ENCODE measurements at regions of chr7 and their contacts with region 1.

Region 1: GRCh38 chr7:152025077-152025936 is at the start of gene GALNT11:
- DNase-seq: peak; percentile 80 to 93 (median 91)
- H3K4me3 ChIP-seq: peak within 1 kb of the TSS; percentile 76 to 85
- H3K4me3 Mint-ChIP-seq: peak within 1 kb of the TSS; percentile 86 to 95 (median 90)
- H3K27ac ChIP-seq: peak within 1 kb of the TSS; percentile 79
- H3K27ac Mint-ChIP-seq: peak within 1 kb of the TSS; percentile 92 to 99 (median 96)
- H3K4me1 ChIP-seq: peaks cover 26% of the 10 kb centered on the region
- H3K4me1 Mint-ChIP-seq: peaks cover 20 to 45% (median 34%) of the 10 kb centered on the region in 4 donors
- H3K27me3 ChIP-seq: no peaks in the 10 kb centered on the region
- H3K27me3 Mint-ChIP-seq: no peaks in the 10 kb centered on the region
- total RNA-seq, gene GALNT11: 19.1 to 23.6 TPM

Region 2: DNA sequence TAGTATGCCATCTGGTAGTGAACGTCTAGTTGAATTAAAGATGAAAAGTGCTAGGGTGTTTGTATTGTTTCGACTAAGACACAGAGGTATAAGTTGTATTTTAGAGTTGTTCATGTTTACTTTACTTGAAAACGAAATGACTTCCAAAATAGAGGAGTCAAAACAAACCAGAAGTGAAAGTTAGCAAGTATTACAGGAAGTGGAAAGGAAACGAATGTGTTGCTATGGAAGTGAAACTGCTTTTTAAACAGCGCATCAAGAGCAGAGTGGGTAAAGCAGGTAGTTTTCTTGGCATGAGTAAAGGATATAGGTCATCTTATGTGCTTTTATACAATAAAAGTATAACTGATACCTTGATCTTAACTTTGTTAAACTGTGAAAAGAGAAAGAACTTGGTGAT is 89.1 kb before region 1 on chr7:
- CTCF ChIA-PET with region 1: no interaction called
- POLR2A ChIA-PET with region 1: no interaction called
- intact Hi-C with region 1: loop called (anchors 1 kb)
- DNase-seq: peak in 4 of 5 donors; percentile 60 to 76 (median 68)
- H3K4me3 ChIP-seq: peak overlapping the region in 1 of 2 donors; percentile 8
- H3K4me3 Mint-ChIP-seq: peak overlapping the region; percentile 78 to 94 (median 87)
- H3K27ac ChIP-seq: peak overlapping the region; percentile 54
- H3K27ac Mint-ChIP-seq: peak overlapping the region; percentile 85 to 99 (median 98)
- H3K4me1 ChIP-seq: peaks cover 15% of the 10 kb centered on the region
- H3K4me1 Mint-ChIP-seq: peaks cover 16 to 23% (median 21%) of the 10 kb centered on the region in 4 donors
- H3K27me3 ChIP-seq: no peaks in the 10 kb centered on the region
- H3K27me3 Mint-ChIP-seq: no peaks in the 10 kb centered on the region

Region 3: DNA sequence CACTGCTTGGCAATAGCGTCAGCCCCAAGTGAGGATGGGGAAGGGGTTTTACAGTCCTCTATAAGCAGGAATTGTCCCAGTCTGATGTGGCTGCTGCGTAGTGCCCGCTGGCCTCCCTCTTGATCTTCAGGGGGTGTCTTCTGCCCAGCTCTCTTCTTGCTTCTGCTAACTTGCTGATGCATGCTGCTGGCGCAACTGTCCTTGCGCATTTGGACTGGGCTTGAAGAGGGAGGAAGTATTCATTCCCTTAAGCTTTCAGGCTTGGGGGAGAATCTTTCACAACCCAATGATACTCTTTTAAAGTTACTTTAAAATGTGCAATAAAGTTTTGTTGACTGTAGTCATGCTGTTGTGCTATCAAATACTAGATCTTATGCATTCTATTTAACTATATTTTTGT is 10.5 kb after region 1 on chr7:
- CTCF ChIA-PET with region 1: no interaction called
- POLR2A ChIA-PET with region 1: no interaction called
- intact Hi-C with region 1: no loop called
- DNase-seq: no peak
- H3K4me3 ChIP-seq: no peak overlapping the region
- H3K4me3 Mint-ChIP-seq: no peak overlapping the region
- H3K27ac ChIP-seq: no peak overlapping the region
- H3K27ac Mint-ChIP-seq: no peak overlapping the region
- H3K4me1 ChIP-seq: no peaks in the 10 kb centered on the region
- H3K4me1 Mint-ChIP-seq: peaks cover 4 to 12% (median 7%) of the 10 kb centered on the region in 4 donors
- H3K27me3 ChIP-seq: no peaks in the 10 kb centered on the region
- H3K27me3 Mint-ChIP-seq: no peaks in the 10 kb centered on the region

Region 4: GRCh38 chr7:152120210-152120609 is 94.9 kb after region 1 on chr7:
- CTCF ChIA-PET with region 1: no interaction called
- POLR2A ChIA-PET with region 1: no interaction called
- intact Hi-C with region 1: no loop called
- DNase-seq: no peak
- H3K4me3 ChIP-seq: no peak overlapping the region
- H3K4me3 Mint-ChIP-seq: no peak overlapping the region
- H3K27ac ChIP-seq: no peak overlapping the region
- H3K27ac Mint-ChIP-seq: peak overlapping the region in 2 of 7 donors; percentile 8 to 32
- H3K4me1 ChIP-seq: peaks cover 7% of the 10 kb centered on the region
- H3K4me1 Mint-ChIP-seq: peaks cover 10 to 20% (median 16%) of the 10 kb centered on the region in 4 donors
- H3K27me3 ChIP-seq: no peaks in the 10 kb centered on the region
- H3K27me3 Mint-ChIP-seq: no peaks in the 10 kb centered on the region

Region 5: DNA sequence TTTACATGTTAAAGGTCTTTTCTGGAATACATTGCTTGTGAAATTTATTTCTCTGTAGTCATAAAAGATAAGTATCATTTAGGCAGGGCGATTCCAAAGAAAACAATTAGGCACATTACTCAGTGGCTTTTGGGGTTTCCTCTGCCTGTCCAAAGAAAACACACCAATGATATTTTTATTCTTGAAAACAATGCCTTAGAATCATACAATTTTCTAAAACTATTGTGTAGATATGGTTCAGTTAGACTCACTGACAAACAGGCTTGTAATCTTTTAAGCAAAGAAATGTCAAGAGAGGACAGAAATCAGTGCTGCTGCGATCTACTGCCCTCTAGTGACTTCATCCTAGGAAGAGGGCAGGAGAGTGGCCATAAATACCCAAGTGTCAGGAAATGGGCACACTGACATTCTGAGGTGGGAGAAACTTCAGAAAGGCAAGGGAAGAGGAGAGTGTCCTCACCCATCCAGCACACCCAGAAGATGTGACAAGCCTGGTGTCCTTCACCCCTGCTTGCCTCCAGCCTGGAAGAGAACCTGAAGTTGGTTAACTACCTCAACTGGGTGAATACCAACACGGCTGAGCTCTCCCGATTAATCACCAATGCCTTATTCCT is 120.7 kb after region 1 on chr7:
- CTCF ChIA-PET with region 1: interaction called, 7 read pairs
- POLR2A ChIA-PET with region 1: interaction called, 5 read pairs
- intact Hi-C with region 1: loop called (anchors 1 kb)
- DNase-seq: peak in 4 of 5 donors; percentile 41 to 45 (median 44)
- H3K4me3 ChIP-seq: peak overlapping the region in 1 of 2 donors; percentile 2
- H3K4me3 Mint-ChIP-seq: peak overlapping the region in 6 of 8 donors; percentile 46 to 83 (median 72)
- H3K27ac ChIP-seq: no peak overlapping the region
- H3K27ac Mint-ChIP-seq: peak overlapping the region; percentile 48 to 95 (median 89)
- H3K4me1 ChIP-seq: peaks cover 47% of the 10 kb centered on the region
- H3K4me1 Mint-ChIP-seq: peaks cover 38 to 48% (median 42%) of the 10 kb centered on the region in 4 donors
- H3K27me3 ChIP-seq: no peaks in the 10 kb centered on the region
- H3K27me3 Mint-ChIP-seq: no peaks in the 10 kb centered on the region

Region 6: GRCh38 chr7:152709287-152710152 is 684.2 kb after region 1 on chr7:
- CTCF ChIA-PET with region 1: interaction called, 4 read pairs
- POLR2A ChIA-PET with region 1: no interaction called
- intact Hi-C with region 1: loop called (anchors 10 kb)
- DNase-seq: no peak
- H3K4me3 ChIP-seq: no peak overlapping the region
- H3K4me3 Mint-ChIP-seq: no peak overlapping the region
- H3K27ac ChIP-seq: no peak overlapping the region
- H3K27ac Mint-ChIP-seq: no peak overlapping the region
- H3K4me1 ChIP-seq: no peaks in the 10 kb centered on the region
- H3K4me1 Mint-ChIP-seq: peaks cover 0 to 6% (median 4%) of the 10 kb centered on the region in 4 donors
- H3K27me3 ChIP-seq: no peaks in the 10 kb centered on the region
- H3K27me3 Mint-ChIP-seq: peaks cover 0 to 7% of the 10 kb centered on the region in 2 donors

Region 7: DNA sequence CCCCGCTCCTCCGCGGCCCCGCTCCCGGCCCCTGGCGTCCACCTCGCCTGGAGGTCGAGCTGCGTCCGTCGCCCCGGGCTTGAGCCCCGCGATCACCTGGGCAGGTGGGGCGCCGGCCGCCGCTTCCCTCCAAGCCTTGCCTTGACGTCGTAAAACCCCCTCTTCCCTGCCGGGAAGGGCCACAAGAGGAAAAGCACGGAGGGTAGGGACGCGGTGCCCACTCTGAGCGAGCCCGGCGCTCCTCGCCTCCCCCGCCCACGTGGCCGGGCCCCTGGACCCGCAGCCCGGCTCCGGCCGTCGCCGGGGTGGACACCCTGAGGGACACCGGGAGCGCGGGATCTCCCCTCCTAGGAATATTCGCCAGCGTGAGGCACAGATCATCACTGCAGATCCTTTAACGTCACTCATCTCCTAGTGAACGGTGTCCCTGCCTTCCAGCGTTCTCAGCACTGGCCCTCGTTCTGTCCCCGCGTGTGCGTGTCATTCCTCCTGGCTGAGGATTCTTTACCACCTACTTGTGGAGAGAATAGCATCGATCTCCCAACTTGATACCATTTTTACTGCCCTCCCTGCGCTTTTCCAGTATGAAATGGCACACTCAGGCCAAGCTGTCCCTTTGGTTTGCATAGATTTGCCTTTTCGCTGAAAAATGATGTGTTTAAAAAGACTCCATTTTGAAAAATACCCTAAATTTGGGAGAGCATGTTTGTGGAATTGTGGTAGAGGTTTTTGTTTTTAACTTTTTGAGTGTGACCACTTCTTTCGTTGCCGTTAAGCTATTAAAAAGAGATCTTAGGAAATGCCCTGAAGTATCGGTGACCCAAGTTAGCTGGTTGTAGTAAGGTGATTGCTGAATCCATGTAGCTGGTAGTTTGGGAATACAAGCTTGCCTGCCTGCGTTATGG is 734.9 kb after region 1 on chr7:
- CTCF ChIA-PET with region 1: no interaction called
- POLR2A ChIA-PET with region 1: no interaction called
- intact Hi-C with region 1: loop called (anchors 2 kb)
- DNase-seq: peak; percentile 12 to 48 (median 23)
- H3K4me3 ChIP-seq: peak overlapping the region; percentile 49 to 68
- H3K4me3 Mint-ChIP-seq: peak overlapping the region; percentile 86 to 96 (median 92)
- H3K27ac ChIP-seq: peak overlapping the region; percentile 81
- H3K27ac Mint-ChIP-seq: peak overlapping the region; percentile 58 to 93 (median 90)
- H3K4me1 ChIP-seq: peaks cover 14% of the 10 kb centered on the region
- H3K4me1 Mint-ChIP-seq: peaks cover 16 to 28% (median 20%) of the 10 kb centered on the region in 4 donors
- H3K27me3 ChIP-seq: no peaks in the 10 kb centered on the region
- H3K27me3 Mint-ChIP-seq: no peaks in the 10 kb centered on the region